ENCODE measurements at regions of chr12 and their contacts with region 1.

Region 1: GRCh38 chr12:8078398-8078797 is 3.7 kb upstream of the NECAP1 start:
- DNase-seq: peak; percentile 18
- H3K4me3 Mint-ChIP-seq: no peak overlapping the region
- H3K27ac Mint-ChIP-seq: no peak overlapping the region
- H3K4me1 Mint-ChIP-seq: peaks cover 19% of the 10 kb centered on the region
- H3K27me3 Mint-ChIP-seq: no peaks in the 10 kb centered on the region

Region 2: DNA sequence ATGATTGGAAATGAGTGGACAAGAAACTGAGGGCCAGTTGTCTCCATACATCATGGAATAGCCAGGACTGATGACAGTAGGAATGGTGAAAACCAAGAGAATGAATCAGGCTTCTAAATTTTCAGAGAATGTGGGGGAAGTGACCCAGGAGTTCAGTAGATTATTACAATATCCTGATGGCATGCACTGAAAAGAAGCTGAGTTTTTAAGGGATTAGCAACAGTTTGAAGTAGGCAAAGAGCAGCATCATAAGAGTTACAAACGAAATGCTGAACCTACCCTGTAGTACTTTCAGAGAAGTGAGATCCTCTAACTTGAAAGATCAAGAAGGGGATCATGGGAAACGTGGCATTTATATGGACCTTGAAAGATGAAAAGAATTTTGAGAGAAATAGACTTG is 218.8 kb before region 1 on chr12:
- intact Hi-C with region 1: loop called (anchors 5 kb)
- DNase-seq: no peak
- H3K4me3 Mint-ChIP-seq: no peak overlapping the region
- H3K27ac Mint-ChIP-seq: no peak overlapping the region
- H3K4me1 Mint-ChIP-seq: peaks cover 14% of the 10 kb centered on the region
- H3K27me3 Mint-ChIP-seq: no peaks in the 10 kb centered on the region

Region 3: GRCh38 chr12:7970475-7971252 is 107.7 kb before region 1 on chr12:
- intact Hi-C with region 1: loop called (anchors 1 kb)
- DNase-seq: peak; percentile 85
- H3K4me3 Mint-ChIP-seq: peak overlapping the region; percentile 96
- H3K27ac Mint-ChIP-seq: peak overlapping the region; percentile 100
- H3K4me1 Mint-ChIP-seq: peaks cover 27% of the 10 kb centered on the region
- H3K27me3 Mint-ChIP-seq: no peaks in the 10 kb centered on the region

Region 4: GRCh38 chr12:8026291-8026900 is 52.0 kb before region 1 on chr12:
- intact Hi-C with region 1: loop called (anchors 1 kb)
- DNase-seq: peak; percentile 97
- H3K4me3 Mint-ChIP-seq: peak overlapping the region; percentile 85
- H3K27ac Mint-ChIP-seq: peak overlapping the region; percentile 99
- H3K4me1 Mint-ChIP-seq: peaks cover 7% of the 10 kb centered on the region
- H3K27me3 Mint-ChIP-seq: no peaks in the 10 kb centered on the region

Region 5: DNA sequence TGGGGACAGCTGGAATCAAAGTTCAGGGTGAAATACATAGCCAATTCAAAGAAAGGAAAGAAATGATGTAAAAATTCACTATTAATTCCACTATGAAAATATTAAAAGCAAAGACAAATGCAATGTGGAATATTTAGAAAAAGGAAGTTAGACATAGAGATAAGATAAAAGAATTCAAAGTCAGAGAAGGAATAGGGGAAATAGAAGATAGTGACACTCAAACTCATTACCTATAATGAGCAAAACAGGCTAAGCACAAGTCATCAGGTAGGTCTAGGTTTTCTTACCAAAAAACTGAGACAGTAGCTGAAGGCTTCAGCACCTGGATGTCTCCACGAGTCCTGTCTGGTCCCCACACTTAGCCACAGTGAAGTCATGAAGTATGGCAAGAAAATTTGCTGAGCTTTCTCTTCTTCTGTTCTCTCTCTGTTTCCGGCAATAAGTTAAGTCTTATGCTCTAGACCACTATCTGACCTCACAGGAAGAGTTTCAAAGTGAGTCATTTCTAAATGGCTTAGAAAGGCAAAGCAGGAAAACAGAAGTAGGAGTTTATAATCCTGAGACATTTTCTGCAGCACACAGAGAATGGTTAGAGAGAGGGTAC is 12.3 kb before region 1 on chr12 and contains the start of gene C3AR1:
- intact Hi-C with region 1: loop called (anchors 1 kb)
- DNase-seq: peak; percentile 37
- H3K4me3 Mint-ChIP-seq: peak within 1 kb of the TSS; percentile 37
- H3K27ac Mint-ChIP-seq: peak within 1 kb of the TSS; percentile 62
- H3K4me1 Mint-ChIP-seq: peaks cover 32% of the 10 kb centered on the region
- H3K27me3 Mint-ChIP-seq: no peaks in the 10 kb centered on the region
- total RNA-seq, gene C3AR1: 0.50 and 0.62 TPM in 2 replicates

Measured in activated T-helper 2 cell treated with anti-CD3 and anti-CD28 coated beads, Interferon-gamma antibody, Interleukin-2, Interleukin-4, amounts not matched to agents 10 μg/mL and 5 μg/mL and 100 μg/mL, durations not matched to agents 14 hours and 24 hours and 36 hours (primary cell).